HEK293 (cell line): ENCODE measurements at regions of chrX and their contacts with region 1.

Region 1: GRCh38 chrX:130079824-130080406 is 30.4 kb downstream of the ELF4 start:
- H3K4me3 ChIP-seq: no peak overlapping the region
- H3K27ac ChIP-seq: no peak overlapping the region
- H3K4me1 ChIP-seq: no peaks in the 10 kb centered on the region
- CTCF ChIP-seq: peak; percentile 45; the same call in 1 of the 2 replicates

Region 2: GRCh38 chrX:130091958-130092522 is 12.1 kb after region 1 on chrX:
- CTCF ChIA-PET with region 1: interaction called, 10 read pairs
- POLR2A ChIA-PET with region 1: no interaction called
- H3K4me3 ChIP-seq: no peak overlapping the region
- H3K27ac ChIP-seq: no peak overlapping the region
- H3K4me1 ChIP-seq: no peaks in the 10 kb centered on the region
- CTCF ChIP-seq: no peak

Region 3: DNA sequence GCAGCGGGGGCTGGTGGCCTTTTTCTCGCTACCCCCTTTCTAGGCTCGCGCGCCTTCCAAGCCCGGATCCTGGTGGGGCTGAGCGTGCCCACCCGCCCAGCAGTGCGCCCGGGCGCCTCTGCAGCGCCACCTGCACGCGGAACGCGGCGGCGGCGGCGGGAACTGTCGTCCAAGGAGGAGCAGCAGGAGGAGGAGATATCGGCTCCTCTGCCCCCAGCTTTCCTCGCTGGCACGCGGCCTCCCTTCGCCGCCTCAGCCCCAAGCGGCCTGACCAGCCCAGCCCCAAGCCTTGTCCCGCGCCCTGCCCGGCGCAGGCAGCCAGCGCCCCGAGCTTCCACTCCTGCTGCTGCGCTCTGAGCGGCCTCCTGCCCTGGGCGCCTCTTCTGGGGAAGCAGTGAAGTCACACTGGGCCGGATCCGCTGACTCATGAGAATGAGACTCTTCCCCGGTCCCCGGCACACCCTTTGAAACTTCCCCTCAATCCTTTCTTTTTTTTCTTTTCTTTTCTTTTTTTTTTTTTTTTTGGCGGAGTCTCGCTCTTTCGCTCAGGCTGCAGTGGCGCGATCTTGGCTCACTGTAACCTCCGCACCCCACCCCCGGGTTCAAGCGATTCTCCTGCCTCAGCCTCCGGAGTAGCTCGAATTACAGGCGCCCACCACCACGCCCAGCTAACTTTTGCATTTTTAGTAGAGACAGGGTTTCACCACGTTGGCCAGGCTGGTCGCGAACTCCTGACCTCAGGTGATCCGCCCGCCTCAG is 41.0 kb after region 1 on chrX:
- CTCF ChIA-PET with region 1: interaction called, 13 read pairs
- POLR2A ChIA-PET with region 1: interaction called, 3 read pairs
- H3K4me3 ChIP-seq: peak overlapping the region; percentile 12
- H3K27ac ChIP-seq: no peak overlapping the region; the same call in 1 of the 2 replicates
- H3K4me1 ChIP-seq: no peaks in the 10 kb centered on the region; the same call in 1 of the 2 replicates
- CTCF ChIP-seq: peak; percentile 95

Region 4: GRCh38 chrX:130186651-130187050 is 106.7 kb after region 1 on chrX:
- CTCF ChIA-PET with region 1: interaction called, 72 read pairs
- POLR2A ChIA-PET with region 1: no interaction called
- H3K4me3 ChIP-seq: no peak overlapping the region
- H3K27ac ChIP-seq: no peak overlapping the region
- H3K4me1 ChIP-seq: no peaks in the 10 kb centered on the region
- CTCF ChIP-seq: no peak

Region 5: DNA sequence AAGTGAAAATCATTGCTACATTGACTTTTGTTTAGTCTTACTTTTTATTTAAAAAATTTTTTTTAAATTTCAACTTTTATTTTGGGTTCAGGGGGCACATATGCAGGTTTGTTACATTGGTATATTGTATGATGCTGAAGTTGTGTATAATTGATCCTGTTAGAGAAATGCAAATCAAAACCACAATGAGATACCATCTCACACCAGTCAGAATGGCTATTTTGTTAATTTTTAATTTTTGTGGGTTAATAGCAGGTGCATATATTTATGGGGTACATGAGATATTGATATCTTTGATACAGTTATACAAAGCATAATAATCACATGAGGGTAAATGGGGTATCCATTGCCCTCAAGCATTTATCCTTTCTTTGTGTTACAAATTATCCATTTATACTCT is 356.0 kb after region 1 on chrX:
- CTCF ChIA-PET with region 1: no interaction called
- POLR2A ChIA-PET with region 1: no interaction called
- H3K4me3 ChIP-seq: no peak overlapping the region
- H3K27ac ChIP-seq: no peak overlapping the region
- H3K4me1 ChIP-seq: no peaks in the 10 kb centered on the region
- CTCF ChIP-seq: no peak